ENCODE measurements at regions of chr19 and their contacts with region 1.

Region 1: GRCh38 chr19:13277104-13277809 is 127.0 kb downstream of the IER2 start:
- DNase-seq: peak; percentile 56
- ATAC-seq: peak; percentile 94

Region 2: DNA sequence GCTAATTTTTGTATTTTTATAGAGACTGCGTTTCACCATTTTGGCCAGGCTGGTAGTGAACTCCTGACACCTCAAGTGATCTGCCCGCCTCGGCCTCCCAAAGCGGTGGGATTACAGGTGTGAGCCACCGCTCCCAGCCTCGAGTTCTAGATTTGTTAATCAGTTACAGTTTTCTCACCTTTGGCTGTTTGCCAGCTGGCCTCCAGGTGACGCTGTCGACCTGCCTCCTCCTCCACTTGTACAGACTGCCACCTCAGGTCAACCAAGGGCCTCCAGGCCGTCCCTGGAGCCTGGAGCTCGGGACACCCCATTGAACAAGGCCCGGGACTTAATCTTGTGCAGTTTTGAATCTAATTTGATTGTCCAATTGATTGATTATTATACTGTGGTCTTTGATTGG is 81.6 kb before region 1 on chr19:
- intact Hi-C with region 1: no loop called
- DNase-seq: no peak
- ATAC-seq: no peak

Region 3: DNA sequence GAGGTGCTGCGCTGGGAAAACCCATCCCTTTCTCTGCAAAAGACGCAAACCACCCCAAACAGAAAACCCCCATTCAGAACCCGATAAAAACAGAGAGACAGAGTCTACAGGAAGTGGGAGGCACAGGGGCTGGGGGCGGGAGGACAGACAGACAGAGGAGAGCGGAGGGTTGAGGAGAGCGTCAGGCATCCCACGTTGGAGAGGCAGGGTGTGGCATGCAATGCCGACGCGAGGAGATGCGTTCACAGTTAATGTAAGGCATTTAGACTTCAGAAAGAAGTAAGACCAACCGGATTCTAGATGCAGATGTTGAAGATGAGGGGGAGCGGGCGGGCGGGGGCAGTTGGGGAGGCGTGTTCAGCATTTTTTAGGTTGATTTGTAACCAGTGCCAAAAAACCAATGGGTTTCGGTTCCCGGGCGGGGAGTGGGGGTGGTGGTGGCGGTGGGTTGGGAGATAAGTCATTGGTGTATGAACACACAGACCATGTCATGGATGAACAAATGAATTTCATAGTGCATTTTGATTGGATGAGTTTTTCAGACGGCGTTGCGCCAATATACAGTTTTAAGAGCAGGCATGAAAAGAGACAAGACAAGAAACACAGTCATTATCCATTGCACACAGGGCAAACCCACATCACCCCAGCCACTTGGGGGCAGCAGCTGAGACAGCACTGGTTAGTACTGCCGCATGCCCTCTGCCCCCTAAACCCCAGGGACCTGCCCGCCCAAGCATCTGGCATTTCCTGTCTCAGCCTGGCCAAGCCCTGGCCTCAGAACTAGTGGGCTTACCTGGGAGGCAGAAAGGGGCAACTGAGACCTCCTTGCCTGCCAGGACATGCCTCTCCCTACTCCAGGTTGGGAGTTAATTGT is 35.8 kb before region 1 on chr19:
- intact Hi-C with region 1: no loop called
- DNase-seq: no peak
- ATAC-seq: no peak

Region 4: DNA sequence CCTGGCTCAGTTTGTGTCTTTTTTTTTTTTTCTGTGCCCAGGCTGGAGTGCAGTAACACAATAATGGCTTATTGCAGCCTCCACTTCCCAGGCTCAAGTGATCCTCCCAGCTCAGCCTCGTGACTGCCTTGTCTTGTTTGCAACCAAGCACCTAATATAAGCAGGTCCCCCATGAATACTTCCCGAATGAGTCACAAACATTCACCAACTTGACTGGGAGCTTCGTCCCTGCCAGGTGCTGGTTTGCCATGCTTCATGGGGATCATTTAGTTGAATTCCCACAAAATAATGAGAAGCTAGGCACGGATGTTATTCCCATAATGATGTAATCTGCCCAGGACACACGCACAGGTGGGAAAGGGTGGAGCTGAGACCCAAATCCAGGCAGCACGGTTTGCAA is 52.5 kb after region 1 on chr19:
- intact Hi-C with region 1: no loop called
- DNase-seq: no peak
- ATAC-seq: no peak

Region 5: DNA sequence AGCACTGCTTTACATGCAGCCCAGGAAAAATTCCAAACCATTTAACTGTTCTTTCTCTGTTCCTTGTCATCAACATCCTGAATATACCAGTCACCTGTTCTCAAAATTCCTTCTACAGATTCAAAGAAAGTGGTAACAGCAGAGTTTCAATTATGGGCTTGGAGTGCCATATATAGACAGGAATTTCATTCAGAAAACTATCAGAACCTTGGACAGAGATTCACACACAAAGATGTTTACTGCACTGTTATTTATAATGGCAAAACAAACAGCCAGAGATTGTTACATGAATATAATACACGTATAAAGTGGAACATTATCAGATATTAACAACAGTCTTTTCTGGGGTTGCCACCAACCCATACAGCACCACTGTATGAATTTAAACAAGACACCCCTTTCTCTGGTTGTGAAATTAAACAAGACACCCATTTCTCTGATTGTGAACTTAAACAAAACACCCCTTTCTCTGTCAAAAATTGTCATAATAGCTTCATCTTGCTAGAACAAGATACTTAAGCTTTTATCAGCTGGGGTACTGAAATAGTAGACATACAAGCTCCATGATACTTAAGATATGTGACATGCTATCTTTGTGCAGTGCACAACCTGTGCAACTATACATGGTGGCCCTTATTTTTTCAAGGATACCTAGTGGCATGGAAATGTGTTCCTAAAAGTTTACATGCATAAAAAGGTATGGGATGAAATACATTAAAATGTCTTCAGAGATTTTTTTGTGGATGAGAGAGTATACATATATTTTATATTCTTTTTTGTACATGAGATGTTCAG is 216.5 kb after region 1 on chr19:
- intact Hi-C with region 1: no loop called
- DNase-seq: no peak
- ATAC-seq: no peak

Region 6: GRCh38 chr19:13588957-13589833 is 311.9 kb after region 1 on chr19:
- intact Hi-C with region 1: loop called (anchors 5 kb)
- DNase-seq: peak; percentile 83
- ATAC-seq: peak; percentile 81